Breast epithelium (tissue), 4 donors: ENCODE measurements at regions of chr21 and their contacts with region 1.

Region 1: DNA sequence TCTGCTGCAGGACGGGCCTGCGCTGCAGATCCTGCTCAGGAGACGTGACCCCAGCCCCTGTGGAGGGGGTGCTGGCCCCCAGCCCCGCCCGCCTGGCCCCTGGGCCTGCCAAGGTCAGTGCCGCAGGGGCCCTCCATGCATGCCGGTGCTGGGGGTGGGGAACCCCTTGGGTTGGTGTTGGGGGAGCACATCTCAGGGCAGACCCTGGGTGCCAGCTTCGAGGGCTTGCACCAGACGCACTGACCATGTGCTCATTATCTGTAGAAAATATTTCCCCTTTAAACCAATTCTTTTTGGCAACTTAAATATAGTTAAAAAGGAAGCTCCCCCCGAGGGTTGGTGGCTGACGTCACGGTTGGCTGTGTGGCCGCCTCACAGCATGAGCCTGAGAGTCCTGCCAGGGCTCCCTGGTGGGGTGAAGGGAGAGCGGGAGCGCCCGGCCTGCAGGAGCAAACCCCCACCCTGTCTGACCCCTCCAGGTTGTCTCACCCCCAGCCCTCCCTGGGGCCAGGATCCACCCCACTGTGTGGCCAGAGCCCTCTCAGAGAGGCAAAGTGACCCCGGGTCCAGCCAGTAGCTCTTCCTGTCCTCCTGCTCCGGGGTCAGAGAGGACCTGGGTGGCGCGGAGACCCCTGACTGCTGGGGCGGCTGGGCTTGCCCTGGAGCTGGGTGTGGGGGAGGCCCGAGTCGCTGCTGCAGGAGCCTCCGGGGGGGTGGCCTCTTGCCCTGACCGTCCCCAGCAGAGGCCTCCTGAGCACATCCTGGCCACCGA is 5.3 kb upstream of the PFKL start:
- DNase-seq: no peak
- H3K4me3 ChIP-seq: peak overlapping the region in 1 of 3 donors; percentile 8
- H3K27ac ChIP-seq: peak overlapping the region in 1 of 2 donors; percentile 3
- H3K4me1 ChIP-seq: peaks cover 0 to 4% of the 10 kb centered on the region in 2 donors
- H3K27me3 ChIP-seq: no peaks in the 10 kb centered on the region
- CTCF ChIP-seq: no peak
- POLR2A ChIP-seq: no peak

Region 2: GRCh38 chr21:44074311-44074958 is 220.1 kb before region 1 on chr21:
- intact Hi-C with region 1: loop called (anchors 5 kb)
- DNase-seq: no peak
- H3K4me3 ChIP-seq: no peak overlapping the region
- H3K27ac ChIP-seq: no peak overlapping the region
- H3K4me1 ChIP-seq: no peaks in the 10 kb centered on the region
- H3K27me3 ChIP-seq: no peaks in the 10 kb centered on the region
- CTCF ChIP-seq: no peak
- POLR2A ChIP-seq: no peak